CD8-positive, alpha-beta T cell (primary cell): ENCODE measurements at regions of chr11 and their contacts with region 1.

Region 1: DNA sequence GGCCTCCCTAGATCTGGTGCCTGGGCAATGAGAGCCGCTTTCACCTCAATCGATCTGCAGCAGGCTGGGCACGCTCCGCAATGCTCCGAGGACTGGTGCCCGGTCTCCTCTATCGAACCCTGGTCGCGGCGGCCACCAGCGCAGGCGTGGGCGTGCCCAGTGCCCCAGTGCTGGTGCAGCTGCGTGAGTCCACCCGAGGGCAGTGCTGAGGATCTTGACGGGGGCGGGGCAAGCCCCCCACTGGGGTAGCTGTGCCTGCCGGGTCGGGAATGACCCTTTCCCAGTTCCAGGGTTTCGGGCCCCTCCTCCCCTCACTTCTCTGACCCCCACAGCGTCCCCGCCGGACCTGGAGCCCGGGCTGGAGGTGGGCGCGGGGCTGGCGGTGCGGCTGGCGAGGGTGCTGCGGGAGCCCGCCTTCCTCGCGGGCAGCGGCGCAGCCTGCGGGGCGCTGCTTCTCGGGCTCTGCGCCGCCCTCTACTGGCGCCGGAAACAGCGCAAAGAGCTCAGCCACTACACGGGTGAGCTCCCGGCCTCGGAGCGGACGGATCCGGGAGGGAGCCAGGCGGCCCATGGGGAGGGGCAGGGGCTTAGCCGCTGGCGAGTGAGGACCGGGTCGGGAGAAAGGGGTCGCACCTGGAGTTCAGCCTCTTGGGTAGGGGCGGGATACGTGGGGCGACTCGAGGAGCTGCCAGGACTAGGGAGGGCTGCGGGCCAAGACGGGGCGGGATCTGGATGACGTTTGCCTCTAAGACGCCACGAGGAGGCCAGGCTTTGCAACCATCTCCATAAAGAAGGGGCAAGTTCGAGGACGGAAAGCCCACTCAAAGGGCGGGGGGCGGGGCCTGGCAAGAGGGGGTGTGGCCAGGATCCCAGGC is 10.9 kb downstream of the ROBO3 start:
- DNase-seq: peak; percentile 60 to 90 (median 76)
- ATAC-seq: peak; percentile 91
- H3K4me3 ChIP-seq: peak overlapping the region; percentile 75 to 88
- H3K4me3 Mint-ChIP-seq: peak overlapping the region; percentile 93
- H3K27ac ChIP-seq: peak overlapping the region; percentile 77 to 96
- H3K27ac Mint-ChIP-seq: peak overlapping the region; percentile 92
- H3K4me1 ChIP-seq: peaks cover 16% of the 10 kb centered on the region
- H3K4me1 Mint-ChIP-seq: peaks cover 24% of the 10 kb centered on the region
- H3K27me3 ChIP-seq: no peaks in the 10 kb centered on the region
- H3K27me3 Mint-ChIP-seq: peaks cover 27% of the 10 kb centered on the region
- CTCF ChIP-seq: peak; percentile 65

Region 2: GRCh38 chr11:124612045-124612444 is 264.1 kb before region 1 on chr11:
- CTCF ChIA-PET with region 1: no interaction called
- POLR2A ChIA-PET with region 1: no interaction called
- intact Hi-C with region 1: no loop called
- DNase-seq: peak in 2 of 9 experiments; percentile 23 to 43
- ATAC-seq: peak; percentile 59
- H3K4me3 ChIP-seq: no peak overlapping the region
- H3K4me3 Mint-ChIP-seq: no peak overlapping the region
- H3K27ac ChIP-seq: no peak overlapping the region
- H3K27ac Mint-ChIP-seq: peak overlapping the region; percentile 64
- H3K4me1 ChIP-seq: peaks cover 8% of the 10 kb centered on the region
- H3K4me1 Mint-ChIP-seq: peaks cover 7% of the 10 kb centered on the region
- H3K27me3 ChIP-seq: no peaks in the 10 kb centered on the region
- H3K27me3 Mint-ChIP-seq: peaks cover 4% of the 10 kb centered on the region
- CTCF ChIP-seq: no peak

Region 3: DNA sequence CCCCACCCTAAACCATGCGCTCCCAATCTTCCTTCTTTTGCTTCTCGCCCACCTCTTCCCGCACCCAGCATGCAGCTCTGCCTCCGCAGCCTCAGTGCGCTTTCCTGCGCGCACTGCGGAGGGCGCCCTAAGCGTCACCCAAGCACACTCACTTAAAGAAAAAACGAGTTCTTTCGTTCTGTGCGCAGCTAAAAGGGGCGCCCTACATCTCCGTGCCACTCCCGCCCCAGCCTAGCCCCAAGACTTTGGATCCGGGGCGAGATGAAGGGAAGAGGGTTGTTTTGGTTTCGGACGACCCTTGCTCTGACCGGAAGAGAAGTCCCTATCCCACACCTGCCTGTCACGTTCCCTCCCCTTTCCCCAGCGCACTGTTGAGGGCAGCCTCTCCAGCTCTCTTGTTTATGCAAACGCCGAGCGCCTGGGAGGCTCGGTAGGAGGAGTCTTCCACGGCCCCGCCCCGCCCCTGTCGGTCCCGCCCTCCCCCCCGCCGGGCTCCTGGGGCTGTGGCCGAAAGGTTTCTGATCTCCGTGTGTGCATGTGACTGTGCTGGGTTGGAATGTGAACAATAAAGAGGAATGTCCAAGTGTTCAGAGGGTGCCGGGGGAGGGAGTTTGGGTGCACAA is 129.4 kb before region 1 on chr11:
- CTCF ChIA-PET with region 1: no interaction called
- POLR2A ChIA-PET with region 1: no interaction called
- intact Hi-C with region 1: loop called in 1 of 2 experiments (anchors 1 kb)
- DNase-seq: peak; percentile 64 to 90 (median 79)
- ATAC-seq: peak; percentile 92
- H3K4me3 ChIP-seq: peak overlapping the region; percentile 87 to 98
- H3K4me3 Mint-ChIP-seq: peak overlapping the region; percentile 95
- H3K27ac ChIP-seq: peak overlapping the region; percentile 58 to 80
- H3K27ac Mint-ChIP-seq: peak overlapping the region; percentile 91
- H3K4me1 ChIP-seq: peaks cover 11% of the 10 kb centered on the region
- H3K4me1 Mint-ChIP-seq: peaks cover 15% of the 10 kb centered on the region
- H3K27me3 ChIP-seq: no peaks in the 10 kb centered on the region
- H3K27me3 Mint-ChIP-seq: peaks cover 2% of the 10 kb centered on the region
- CTCF ChIP-seq: peak; percentile 55

Region 4: GRCh38 chr11:124758317-124759203 is 117.6 kb before region 1 on chr11:
- CTCF ChIA-PET with region 1: interaction called, 3 read pairs
- POLR2A ChIA-PET with region 1: interaction called, 6 read pairs
- intact Hi-C with region 1: loop called in 1 of 2 experiments (anchors 5 kb)
- DNase-seq: peak; percentile 42 to 78 (median 70)
- ATAC-seq: peak; percentile 72
- H3K4me3 ChIP-seq: peak overlapping the region; percentile 6 to 16
- H3K4me3 Mint-ChIP-seq: peak overlapping the region; percentile 58
- H3K27ac ChIP-seq: no peak overlapping the region
- H3K27ac Mint-ChIP-seq: no peak overlapping the region
- H3K4me1 ChIP-seq: peaks cover 34% of the 10 kb centered on the region
- H3K4me1 Mint-ChIP-seq: peaks cover 33% of the 10 kb centered on the region
- H3K27me3 ChIP-seq: peaks cover 32 to 39% of the 10 kb centered on the region in 2 experiments
- H3K27me3 Mint-ChIP-seq: peaks cover 40% of the 10 kb centered on the region
- CTCF ChIP-seq: peak; percentile 81

Region 5: GRCh38 chr11:124793466-124794278 is 82.5 kb before region 1 on chr11:
- CTCF ChIA-PET with region 1: interaction called, 4 read pairs
- POLR2A ChIA-PET with region 1: no interaction called
- intact Hi-C with region 1: loop called in 1 of 2 experiments (anchors 2 kb)
- DNase-seq: peak in 4 of 9 experiments; percentile 15 to 69 (median 39)
- ATAC-seq: peak; percentile 49
- H3K4me3 ChIP-seq: no peak overlapping the region
- H3K4me3 Mint-ChIP-seq: no peak overlapping the region
- H3K27ac ChIP-seq: no peak overlapping the region
- H3K27ac Mint-ChIP-seq: no peak overlapping the region
- H3K4me1 ChIP-seq: peaks cover 3% of the 10 kb centered on the region
- H3K4me1 Mint-ChIP-seq: peaks cover 46% of the 10 kb centered on the region
- H3K27me3 ChIP-seq: no peaks in the 10 kb centered on the region
- H3K27me3 Mint-ChIP-seq: no peaks in the 10 kb centered on the region
- CTCF ChIP-seq: peak; percentile 68

Region 6: DNA sequence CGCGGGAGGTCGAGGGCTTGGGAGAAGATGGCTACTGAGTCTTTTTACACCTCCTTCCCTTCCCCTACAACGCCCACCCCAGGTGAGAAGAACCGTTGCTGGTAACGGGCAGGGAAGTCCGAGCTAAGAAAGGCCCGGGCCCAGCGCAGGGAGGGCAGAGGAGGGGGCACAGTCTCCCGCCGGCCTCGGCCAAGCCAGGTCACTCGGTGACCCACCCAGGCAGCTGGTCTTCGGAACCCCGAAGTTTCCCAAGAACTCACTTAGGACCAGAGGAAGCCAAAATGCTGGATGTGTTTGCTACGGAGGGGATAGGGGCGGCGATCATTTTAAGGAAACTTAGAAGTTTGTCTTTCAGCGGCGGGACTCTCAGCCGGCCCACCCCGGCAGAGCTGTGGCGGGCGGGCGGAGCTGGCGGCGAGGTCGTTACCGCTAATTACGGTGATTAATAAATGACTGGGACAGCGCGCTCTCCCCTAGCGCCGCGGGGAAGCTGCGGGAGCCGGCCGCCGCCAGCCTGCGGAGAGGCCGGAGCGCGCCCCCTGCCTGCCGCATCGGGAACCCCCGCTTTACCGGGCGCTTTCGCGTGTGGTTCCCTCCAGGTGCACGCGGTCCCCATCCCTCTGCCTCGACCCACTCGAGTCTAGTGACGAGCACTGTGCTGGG is 10.1 kb before region 1 on chr11:
- CTCF ChIA-PET with region 1: interaction called, 10 read pairs
- POLR2A ChIA-PET with region 1: interaction called, 6 read pairs
- intact Hi-C with region 1: no loop called
- DNase-seq: peak in 8 of 9 experiments; percentile 26 to 67 (median 54)
- ATAC-seq: peak; percentile 66
- H3K4me3 ChIP-seq: peak overlapping the region; percentile 8 to 33
- H3K4me3 Mint-ChIP-seq: peak overlapping the region; percentile 12
- H3K27ac ChIP-seq: no peak overlapping the region
- H3K27ac Mint-ChIP-seq: no peak overlapping the region
- H3K4me1 ChIP-seq: peaks cover 47% of the 10 kb centered on the region
- H3K4me1 Mint-ChIP-seq: peaks cover 43% of the 10 kb centered on the region
- H3K27me3 ChIP-seq: peaks cover 56 to 62% of the 10 kb centered on the region in 2 experiments
- H3K27me3 Mint-ChIP-seq: peaks cover 86% of the 10 kb centered on the region
- CTCF ChIP-seq: peak; percentile 72

Region 7: GRCh38 chr11:124920870-124921609 is 44.9 kb after region 1 on chr11:
- CTCF ChIA-PET with region 1: interaction called, 4 read pairs
- POLR2A ChIA-PET with region 1: interaction called, 7 read pairs
- intact Hi-C with region 1: loop called in 1 of 2 experiments (anchors 1 kb)
- DNase-seq: peak; percentile 53 to 94 (median 81)
- ATAC-seq: peak; percentile 87
- H3K4me3 ChIP-seq: peak overlapping the region; percentile 25 to 42
- H3K4me3 Mint-ChIP-seq: peak overlapping the region; percentile 83
- H3K27ac ChIP-seq: peak overlapping the region in 1 of 2 experiments; percentile 42
- H3K27ac Mint-ChIP-seq: peak overlapping the region; percentile 77
- H3K4me1 ChIP-seq: peaks cover 28% of the 10 kb centered on the region
- H3K4me1 Mint-ChIP-seq: peaks cover 27% of the 10 kb centered on the region
- H3K27me3 ChIP-seq: no peaks in the 10 kb centered on the region
- H3K27me3 Mint-ChIP-seq: no peaks in the 10 kb centered on the region
- CTCF ChIP-seq: no peak